CD4-positive, alpha-beta T cell (primary cell): ENCODE measurements at regions of chrX and their contacts with region 1.

Region 1: GRCh38 chrX:102950908-102951866 is 14.1 kb downstream of the RAB40AL start:
- DNase-seq: peak; percentile 18 to 68 (median 42)
- ATAC-seq: peak; percentile 68
- H3K4me3 ChIP-seq: peak overlapping the region; percentile 45
- H3K4me3 Mint-ChIP-seq: peak overlapping the region; percentile 85
- H3K27ac ChIP-seq: no peak overlapping the region
- H3K27ac Mint-ChIP-seq: no peak overlapping the region
- H3K4me1 ChIP-seq: peaks cover 4% of the 10 kb centered on the region
- H3K4me1 Mint-ChIP-seq: peaks cover 6% of the 10 kb centered on the region
- H3K27me3 ChIP-seq: no peaks in the 10 kb centered on the region
- H3K27me3 Mint-ChIP-seq: no peaks in the 10 kb centered on the region
- CTCF ChIP-seq: peak; percentile 59

Region 2: DNA sequence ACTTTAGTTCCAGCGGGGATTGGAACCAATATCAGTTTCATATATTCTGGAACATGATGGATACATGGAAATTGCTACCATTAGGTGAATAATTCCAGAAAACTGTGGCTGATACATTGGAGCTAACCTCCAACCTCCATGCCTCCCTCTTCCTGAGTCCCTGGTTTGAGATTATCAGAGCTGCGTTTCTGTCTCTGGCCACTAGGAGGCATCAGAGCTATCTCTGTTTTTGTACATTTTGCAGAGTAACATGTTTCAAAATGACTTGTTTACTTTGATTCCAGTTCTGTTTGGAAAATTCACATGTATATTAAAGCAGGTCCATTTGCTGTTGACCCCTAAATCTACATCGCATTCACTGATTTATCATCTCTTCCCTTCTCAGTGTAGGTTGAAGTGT is 16.6 kb before region 1 on chrX:
- CTCF ChIA-PET with region 1: interaction called, 12 read pairs
- POLR2A ChIA-PET with region 1: no interaction called
- intact Hi-C with region 1: no loop called
- DNase-seq: peak in 10 of 14 experiments; percentile 1 to 50 (median 12)
- ATAC-seq: no peak
- H3K4me3 ChIP-seq: no peak overlapping the region
- H3K4me3 Mint-ChIP-seq: no peak overlapping the region
- H3K27ac ChIP-seq: no peak overlapping the region
- H3K27ac Mint-ChIP-seq: no peak overlapping the region
- H3K4me1 ChIP-seq: no peaks in the 10 kb centered on the region
- H3K4me1 Mint-ChIP-seq: no peaks in the 10 kb centered on the region
- H3K27me3 ChIP-seq: no peaks in the 10 kb centered on the region
- H3K27me3 Mint-ChIP-seq: no peaks in the 10 kb centered on the region
- CTCF ChIP-seq: peak; percentile 58

Region 3: DNA sequence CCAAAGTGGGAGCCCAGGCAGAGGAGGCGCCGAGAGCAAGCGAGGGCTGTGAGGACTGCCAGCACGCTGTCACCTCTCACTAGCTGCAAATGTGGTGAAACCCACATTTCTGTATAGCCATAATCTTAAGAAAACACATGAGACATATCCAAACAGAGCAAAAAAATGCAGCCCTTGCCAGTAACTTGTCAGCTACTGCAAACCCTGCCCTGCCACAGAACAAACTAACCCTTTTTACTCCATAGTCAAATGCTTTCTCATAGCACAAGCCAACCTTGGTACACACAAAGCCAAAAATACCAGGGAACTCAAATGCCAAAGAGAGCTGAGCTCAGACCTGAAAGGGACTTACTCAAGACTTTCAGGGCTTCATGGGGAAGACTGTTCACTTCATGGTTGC is 156.6 kb after region 1 on chrX:
- CTCF ChIA-PET with region 1: no interaction called
- POLR2A ChIA-PET with region 1: no interaction called
- intact Hi-C with region 1: no loop called
- DNase-seq: no peak
- ATAC-seq: no peak
- H3K4me3 ChIP-seq: no peak overlapping the region
- H3K4me3 Mint-ChIP-seq: no peak overlapping the region
- H3K27ac ChIP-seq: no peak overlapping the region
- H3K27ac Mint-ChIP-seq: no peak overlapping the region
- H3K4me1 ChIP-seq: no peaks in the 10 kb centered on the region
- H3K4me1 Mint-ChIP-seq: no peaks in the 10 kb centered on the region
- H3K27me3 ChIP-seq: no peaks in the 10 kb centered on the region
- H3K27me3 Mint-ChIP-seq: no peaks in the 10 kb centered on the region
- CTCF ChIP-seq: no peak

Region 4: GRCh38 chrX:103175944-103176753 is 225.0 kb after region 1 on chrX:
- CTCF ChIA-PET with region 1: interaction called, 12 read pairs
- POLR2A ChIA-PET with region 1: no interaction called
- intact Hi-C with region 1: loop called (anchors 1 to 2 kb)
- DNase-seq: peak; percentile 22 to 70 (median 45)
- ATAC-seq: peak; percentile 79
- H3K4me3 ChIP-seq: no peak overlapping the region
- H3K4me3 Mint-ChIP-seq: peak overlapping the region; percentile 49
- H3K27ac ChIP-seq: no peak overlapping the region
- H3K27ac Mint-ChIP-seq: no peak overlapping the region
- H3K4me1 ChIP-seq: peaks cover 3% of the 10 kb centered on the region
- H3K4me1 Mint-ChIP-seq: peaks cover 4% of the 10 kb centered on the region
- H3K27me3 ChIP-seq: no peaks in the 10 kb centered on the region
- H3K27me3 Mint-ChIP-seq: peaks cover 23% of the 10 kb centered on the region
- CTCF ChIP-seq: peak; percentile 66

Region 5: GRCh38 chrX:103248553-103248952 is 297.4 kb after region 1 on chrX:
- CTCF ChIA-PET with region 1: no interaction called
- POLR2A ChIA-PET with region 1: no interaction called
- intact Hi-C with region 1: loop called in 1 of 2 experiments (anchors 5 kb)
- DNase-seq: peak in 4 of 14 experiments; percentile 13 to 47 (median 40)
- ATAC-seq: no peak
- H3K4me3 ChIP-seq: no peak overlapping the region
- H3K4me3 Mint-ChIP-seq: no peak overlapping the region
- H3K27ac ChIP-seq: no peak overlapping the region
- H3K27ac Mint-ChIP-seq: no peak overlapping the region
- H3K4me1 ChIP-seq: peaks cover under 1% of the 10 kb centered on the region
- H3K4me1 Mint-ChIP-seq: peaks cover 8% of the 10 kb centered on the region
- H3K27me3 ChIP-seq: no peaks in the 10 kb centered on the region
- H3K27me3 Mint-ChIP-seq: no peaks in the 10 kb centered on the region
- CTCF ChIP-seq: peak; percentile 46

Region 6: GRCh38 chrX:103276539-103277002 is 325.4 kb after region 1 on chrX and contains the start of gene TCEAL5:
- CTCF ChIA-PET with region 1: no interaction called
- POLR2A ChIA-PET with region 1: no interaction called
- intact Hi-C with region 1: no loop called
- DNase-seq: peak in 2 of 14 experiments; percentile 4 to 6
- ATAC-seq: no peak
- H3K4me3 ChIP-seq: peak within 1 kb of the TSS; percentile 12
- H3K4me3 Mint-ChIP-seq: peak within 1 kb of the TSS; percentile 15
- H3K27ac ChIP-seq: no peak within 1 kb of the TSS
- H3K27ac Mint-ChIP-seq: no peak within 1 kb of the TSS
- H3K4me1 ChIP-seq: peaks cover 6% of the 10 kb centered on the region
- H3K4me1 Mint-ChIP-seq: peaks cover 10% of the 10 kb centered on the region
- H3K27me3 ChIP-seq: peaks cover 9 to 28% of the 10 kb centered on the region in 2 experiments
- H3K27me3 Mint-ChIP-seq: peaks cover 73% of the 10 kb centered on the region
- CTCF ChIP-seq: no peak
- total RNA-seq, gene TCEAL5: not detected